PC-3 (cell line): ENCODE measurements at regions of chr10 and their contacts with region 1.

Region 1: GRCh38 chr10:53601260-53601875 is 828.8 kb upstream of the MBL2 start:
- DNase-seq: peak; percentile 92
- ATAC-seq: peak; percentile 55
- H3K4me3 ChIP-seq: no peak overlapping the region
- H3K27ac ChIP-seq: no peak overlapping the region
- H3K4me1 ChIP-seq: peaks cover 20% of the 10 kb centered on the region
- H3K27me3 ChIP-seq: no peaks in the 10 kb centered on the region
- CTCF ChIP-seq: peak; percentile 100; the same call in 1 of the 2 replicates

Region 2: DNA sequence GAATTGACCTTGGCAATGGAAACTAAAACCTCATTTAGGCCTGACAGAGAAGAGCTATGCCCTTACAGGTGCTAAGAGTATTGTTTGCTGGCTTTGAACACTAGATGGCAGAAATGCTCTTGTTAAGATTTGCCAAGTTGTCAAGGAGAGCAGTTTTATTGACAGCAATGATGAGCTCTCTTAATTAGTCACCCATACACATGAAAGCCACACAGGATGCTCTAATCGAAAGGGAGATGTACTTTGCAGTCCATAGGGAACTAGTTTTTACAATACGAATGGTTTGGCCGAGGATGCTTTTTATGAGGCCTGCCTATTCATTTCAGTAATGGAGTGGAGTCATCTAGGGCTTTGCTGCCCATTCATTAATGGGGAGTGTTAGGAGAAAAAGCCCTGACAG is 783.3 kb before region 1 on chr10:
- CTCF ChIA-PET with region 1: interaction called, 7 read pairs
- POLR2A ChIA-PET with region 1: interaction called, 4 read pairs
- intact Hi-C with region 1: loop called (anchors 1 kb)
- DNase-seq: peak; percentile 100
- ATAC-seq: peak; percentile 82
- H3K4me3 ChIP-seq: no peak overlapping the region
- H3K27ac ChIP-seq: no peak overlapping the region
- H3K4me1 ChIP-seq: peaks cover 21% of the 10 kb centered on the region
- H3K27me3 ChIP-seq: no peaks in the 10 kb centered on the region
- CTCF ChIP-seq: peak; percentile 100

Region 3: GRCh38 chr10:53209944-53210611 is 391.3 kb before region 1 on chr10:
- CTCF ChIA-PET with region 1: no interaction called
- POLR2A ChIA-PET with region 1: no interaction called
- intact Hi-C with region 1: loop called (anchors 1 kb)
- DNase-seq: peak; percentile 97
- ATAC-seq: peak; percentile 96
- H3K4me3 ChIP-seq: no peak overlapping the region
- H3K27ac ChIP-seq: no peak overlapping the region
- H3K4me1 ChIP-seq: no peaks in the 10 kb centered on the region
- H3K27me3 ChIP-seq: no peaks in the 10 kb centered on the region
- CTCF ChIP-seq: peak; percentile 99

Region 4: GRCh38 chr10:53356616-53357349 is 244.6 kb before region 1 on chr10:
- CTCF ChIA-PET with region 1: no interaction called
- POLR2A ChIA-PET with region 1: interaction called, 14 read pairs
- intact Hi-C with region 1: no loop called
- DNase-seq: peak; percentile 97
- ATAC-seq: peak; percentile 90
- H3K4me3 ChIP-seq: no peak overlapping the region
- H3K27ac ChIP-seq: 0 out of 2 replicates have a peak overlapping the region, but pooled peaks have one; percentile 1
- H3K4me1 ChIP-seq: peaks cover 19% of the 10 kb centered on the region
- H3K27me3 ChIP-seq: no peaks in the 10 kb centered on the region
- CTCF ChIP-seq: no peak

Region 5: DNA sequence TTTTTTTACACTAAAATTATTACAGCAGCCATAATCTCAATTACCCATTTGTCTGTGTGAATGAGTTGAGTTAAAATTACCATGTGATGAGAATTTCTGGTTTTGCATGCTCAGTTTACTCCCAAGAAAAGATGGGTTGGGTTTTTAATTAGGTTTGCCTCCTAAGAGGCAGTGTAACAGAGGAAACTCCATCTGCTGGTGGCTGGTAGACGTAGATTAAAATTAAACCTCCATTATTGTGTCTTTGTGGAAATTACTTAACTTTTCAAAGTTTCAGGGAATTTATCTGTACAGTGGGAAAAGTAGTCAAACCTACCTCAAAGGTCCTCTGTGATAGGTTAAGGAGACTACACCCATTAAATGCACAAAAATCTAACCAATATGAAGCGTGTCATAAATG is 245.4 kb after region 1 on chr10:
- CTCF ChIA-PET with region 1: no interaction called
- POLR2A ChIA-PET with region 1: no interaction called
- intact Hi-C with region 1: loop called (anchors 1 kb)
- DNase-seq: peak; percentile 37
- ATAC-seq: peak; percentile 73
- H3K4me3 ChIP-seq: no peak overlapping the region
- H3K27ac ChIP-seq: no peak overlapping the region
- H3K4me1 ChIP-seq: 0 out of 2 replicates have a peak, but pooled peaks cover 4% of the 10 kb centered on the region
- H3K27me3 ChIP-seq: no peaks in the 10 kb centered on the region
- CTCF ChIP-seq: peak; percentile 72

Region 6: DNA sequence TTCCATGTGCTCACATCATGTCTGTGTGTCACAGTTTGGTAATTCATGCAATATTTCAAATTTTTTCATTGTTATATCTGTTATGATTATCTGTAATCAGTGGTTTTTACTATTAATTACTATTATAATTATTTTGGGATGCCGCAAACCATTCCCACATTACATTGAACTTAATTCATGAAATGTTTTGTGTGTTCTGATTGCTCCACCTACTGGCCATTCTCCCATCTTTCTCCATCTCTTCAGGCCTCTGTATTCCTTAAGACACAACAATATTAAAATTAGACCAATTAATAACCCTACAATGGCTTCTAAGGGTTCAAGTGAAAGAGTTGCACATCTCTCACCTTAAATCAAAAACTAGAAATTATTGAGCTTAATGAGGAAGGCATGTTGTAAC is 801.2 kb after region 1 on chr10:
- CTCF ChIA-PET with region 1: no interaction called
- POLR2A ChIA-PET with region 1: no interaction called
- intact Hi-C with region 1: loop called (anchors 1 kb)
- DNase-seq: peak; percentile 76
- ATAC-seq: peak; percentile 76
- H3K4me3 ChIP-seq: no peak overlapping the region
- H3K27ac ChIP-seq: no peak overlapping the region
- H3K4me1 ChIP-seq: no peaks in the 10 kb centered on the region
- H3K27me3 ChIP-seq: no peaks in the 10 kb centered on the region
- CTCF ChIP-seq: peak; percentile 92